ENCODE measurements at regions of chr16 and their contacts with region 1.

Region 1: DNA sequence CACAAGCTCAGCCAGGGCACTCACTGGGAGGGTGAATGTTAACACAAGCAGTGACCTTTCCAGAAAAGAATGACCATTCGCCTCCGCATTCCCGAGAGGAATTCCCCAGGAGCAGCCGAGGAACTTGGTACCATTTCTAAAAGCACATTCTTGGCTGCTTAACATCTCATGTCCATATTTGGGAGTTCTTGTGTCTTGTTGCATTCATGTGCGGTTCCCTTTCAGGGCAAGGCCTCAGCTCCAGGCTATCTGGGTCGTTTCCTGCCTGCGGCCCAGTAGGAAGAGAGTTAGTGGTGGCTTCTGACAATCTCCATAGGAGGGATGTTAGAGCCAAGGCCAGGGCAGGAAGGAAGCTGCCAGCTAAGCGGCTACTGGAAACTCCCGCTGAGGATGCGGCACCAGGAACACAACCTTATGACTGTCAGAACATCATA is 27.8 kb upstream of the MEAK7 start:
- DNase-seq: peak in 1 of 2 experiments; percentile 68
- H3K4me3 ChIP-seq: no peak overlapping the region
- H3K27ac ChIP-seq: no peak overlapping the region
- H3K4me1 ChIP-seq: no peaks in the 10 kb centered on the region
- H3K27me3 ChIP-seq: peaks cover 16% of the 10 kb centered on the region; the same call in 1 of the 2 replicates
- CTCF ChIP-seq: no peak

Region 2: DNA sequence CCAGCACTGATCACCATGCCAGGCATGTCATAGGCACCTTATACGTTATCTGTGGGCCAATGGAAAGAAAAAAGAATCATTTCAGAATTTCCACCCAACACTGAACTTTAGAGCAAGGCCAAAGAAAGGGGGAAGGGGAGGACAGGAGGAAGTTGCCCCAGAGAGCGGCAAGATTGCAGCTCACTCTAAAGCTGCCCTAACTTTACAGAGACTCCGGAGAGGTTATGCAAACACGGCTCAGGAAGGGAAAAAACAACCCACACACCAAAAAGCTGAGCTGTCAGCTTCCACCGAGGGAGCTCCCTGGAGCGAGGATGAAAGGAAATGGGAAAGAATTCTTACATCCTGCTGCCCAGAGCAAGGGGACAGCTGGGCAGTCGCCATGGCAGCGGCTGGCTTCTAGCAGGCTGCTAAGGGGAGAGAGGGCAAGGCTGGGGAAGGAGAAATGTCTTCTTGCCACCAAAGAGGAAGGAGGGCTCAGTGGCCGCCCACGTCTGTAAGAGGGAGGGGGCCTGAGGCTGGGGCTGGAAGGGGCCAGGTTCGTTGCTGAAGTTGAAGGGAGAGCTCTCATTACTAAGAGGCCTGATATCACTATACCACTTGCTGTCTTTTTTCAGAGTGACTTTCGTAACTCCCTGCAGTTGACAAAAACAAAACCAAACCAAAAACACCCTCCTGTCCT is 67.4 kb after region 1 on chr16:
- CTCF ChIA-PET with region 1: no interaction called
- POLR2A ChIA-PET with region 1: no interaction called
- intact Hi-C with region 1: loop called (anchors 5 kb)
- DNase-seq: no peak
- H3K4me3 ChIP-seq: no peak overlapping the region
- H3K27ac ChIP-seq: no peak overlapping the region; the same call in 1 of the 2 replicates
- H3K4me1 ChIP-seq: peaks cover 16% of the 10 kb centered on the region; the same call in 1 of the 2 replicates
- H3K27me3 ChIP-seq: no peaks in the 10 kb centered on the region
- CTCF ChIP-seq: no peak